ENCODE measurements at regions of chr2 and their contacts with region 1.

Region 1: DNA sequence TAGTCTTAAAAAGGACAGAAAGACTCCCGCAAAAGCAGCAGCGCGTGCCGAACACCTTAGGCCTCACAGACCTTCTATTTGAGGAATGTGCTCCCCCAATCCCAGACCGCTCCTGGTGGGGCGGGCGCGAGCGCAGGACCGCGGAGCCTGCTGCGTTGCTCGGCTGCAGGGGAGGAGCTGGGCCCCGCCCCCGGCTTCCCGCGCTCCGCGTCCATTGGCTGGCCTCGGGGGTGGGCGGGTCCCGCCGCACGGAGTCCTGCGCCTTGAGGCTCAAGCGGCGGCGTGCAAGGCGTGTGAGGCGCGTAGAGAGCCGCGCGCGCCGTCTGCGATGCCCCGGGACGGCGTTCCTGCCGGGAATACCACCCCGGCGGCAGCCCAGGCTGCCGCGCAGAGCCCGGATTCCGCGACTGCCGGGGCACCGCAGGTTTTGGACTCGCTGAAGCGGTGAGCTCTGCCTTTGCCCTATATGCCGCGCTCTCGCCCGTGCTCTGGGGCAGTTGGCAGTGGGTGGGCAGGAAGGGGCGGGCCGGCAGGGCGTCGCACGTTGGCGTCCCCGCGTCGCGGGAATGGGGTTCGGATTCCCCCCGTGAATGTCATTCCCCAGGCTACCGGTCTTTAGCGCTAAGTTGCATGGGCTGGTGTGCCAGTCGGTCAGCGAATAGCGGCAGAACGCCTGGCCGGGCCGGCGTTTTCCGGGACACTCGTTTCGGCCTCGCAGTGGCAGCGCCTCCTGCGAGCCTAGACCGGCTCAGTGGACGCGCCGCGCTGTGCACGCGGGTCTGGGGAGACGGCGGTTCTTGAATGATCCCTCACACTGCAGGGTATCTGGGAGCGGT is 49.6 kb upstream of the PAIP2B start:
- H3K4me3 Mint-ChIP-seq: peak overlapping the region; percentile 78
- H3K27ac Mint-ChIP-seq: peak overlapping the region; percentile 30
- H3K4me1 Mint-ChIP-seq: peaks cover 25% of the 10 kb centered on the region
- H3K27me3 Mint-ChIP-seq: peaks cover 54% of the 10 kb centered on the region

Region 2: GRCh38 chr2:71130113-71130904 is 146.2 kb before region 1 on chr2 and contains the starts of genes MCEE and MPHOSPH10:
- intact Hi-C with region 1: loop called (anchors 10 kb)
- H3K4me3 Mint-ChIP-seq: no peak within 1 kb of the TSS
- H3K27ac Mint-ChIP-seq: no peak within 1 kb of the TSS
- H3K4me1 Mint-ChIP-seq: no peaks in the 10 kb centered on the region
- H3K27me3 Mint-ChIP-seq: no peaks in the 10 kb centered on the region

Region 3: GRCh38 chr2:71226965-71227560 is 49.5 kb before region 1 on chr2 and contains the start of gene PAIP2B:
- intact Hi-C with region 1: loop called (anchors 1 kb)
- H3K4me3 Mint-ChIP-seq: peak within 1 kb of the TSS; percentile 93
- H3K27ac Mint-ChIP-seq: peak within 1 kb of the TSS; percentile 68
- H3K4me1 Mint-ChIP-seq: peaks cover 15% of the 10 kb centered on the region
- H3K27me3 Mint-ChIP-seq: peaks cover 20% of the 10 kb centered on the region

Region 4: GRCh38 chr2:71395471-71395870 is 118.9 kb after region 1 on chr2:
- intact Hi-C with region 1: no loop called
- H3K4me3 Mint-ChIP-seq: no peak overlapping the region
- H3K27ac Mint-ChIP-seq: no peak overlapping the region
- H3K4me1 Mint-ChIP-seq: no peaks in the 10 kb centered on the region
- H3K27me3 Mint-ChIP-seq: no peaks in the 10 kb centered on the region